ENCODE measurements at regions of chr12 and their contacts with region 1.

Region 1: DNA sequence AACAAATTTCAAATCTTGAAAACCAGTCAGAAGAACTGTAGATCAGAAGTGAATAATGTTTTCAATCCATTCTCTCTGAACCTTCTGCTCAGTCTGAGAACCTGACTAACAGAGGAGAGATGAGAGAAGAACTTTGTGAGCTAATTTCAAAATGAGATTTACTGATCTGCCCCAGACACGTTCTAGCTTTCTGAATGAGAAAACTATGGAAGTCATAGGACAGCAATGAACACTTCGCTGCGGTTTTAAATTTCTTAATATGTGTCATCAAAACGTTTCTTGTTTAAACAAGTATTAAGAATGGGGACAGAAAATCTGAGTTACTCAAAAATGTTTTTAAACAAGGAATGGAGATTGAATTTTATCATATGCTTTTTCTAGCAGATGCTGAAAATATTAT is 66.6 kb upstream of the FAR2 start:
- DNase-seq: no peak
- H3K4me3 ChIP-seq: no peak overlapping the region
- H3K27ac ChIP-seq: no peak overlapping the region
- H3K4me1 ChIP-seq: no peaks in the 10 kb centered on the region
- H3K27me3 ChIP-seq: no peaks in the 10 kb centered on the region
- CTCF ChIP-seq: no peak
- EP300 ChIP-seq: no peak
- POLR2A ChIP-seq: no peak

Region 2: DNA sequence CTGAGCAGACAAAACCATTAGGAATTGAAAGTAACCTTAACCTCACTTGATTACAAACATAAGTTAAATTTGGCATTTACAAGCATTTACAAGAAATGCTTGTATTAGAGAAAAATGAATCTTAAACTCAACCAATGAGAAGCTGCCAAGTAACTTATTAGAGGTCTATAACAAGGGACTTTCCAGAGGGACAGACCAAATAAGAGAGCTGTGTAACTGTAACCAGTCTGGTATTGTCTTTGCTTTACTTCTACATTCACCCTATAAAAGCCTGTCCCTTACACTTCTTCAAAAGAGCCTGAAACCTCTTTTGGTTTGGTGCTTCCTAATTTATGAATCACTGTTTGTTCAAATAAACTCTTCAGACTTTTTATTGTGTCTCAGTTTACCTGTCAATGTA is 383.5 kb before region 1 on chr12:
- intact Hi-C with region 1: no loop called
- DNase-seq: no peak
- H3K4me3 ChIP-seq: no peak overlapping the region
- H3K27ac ChIP-seq: no peak overlapping the region
- H3K4me1 ChIP-seq: no peaks in the 10 kb centered on the region
- H3K27me3 ChIP-seq: no peaks in the 10 kb centered on the region
- CTCF ChIP-seq: no peak
- EP300 ChIP-seq: no peak
- POLR2A ChIP-seq: no peak

Region 3: GRCh38 chr12:29234965-29235626 is 152.6 kb after region 1 on chr12:
- intact Hi-C with region 1: no loop called
- DNase-seq: no peak
- H3K4me3 ChIP-seq: no peak overlapping the region
- H3K27ac ChIP-seq: no peak overlapping the region
- H3K4me1 ChIP-seq: no peaks in the 10 kb centered on the region
- H3K27me3 ChIP-seq: no peaks in the 10 kb centered on the region
- CTCF ChIP-seq: no peak
- EP300 ChIP-seq: no peak
- POLR2A ChIP-seq: no peak

Region 4: GRCh38 chr12:29317556-29318363 is 235.2 kb after region 1 on chr12:
- intact Hi-C with region 1: loop called (anchors 5 kb)
- DNase-seq: peak; percentile 38 to 79
- H3K4me3 ChIP-seq: no peak overlapping the region
- H3K27ac ChIP-seq: no peak overlapping the region
- H3K4me1 ChIP-seq: no peaks in the 10 kb centered on the region
- H3K27me3 ChIP-seq: no peaks in the 10 kb centered on the region
- CTCF ChIP-seq: peak in 5 of 7 experiments; percentile 34 to 81 (median 59)
- EP300 ChIP-seq: no peak
- POLR2A ChIP-seq: no peak